Left cardiac atrium (tissue), 4 donors: ENCODE measurements at regions of chr4 and their contacts with region 1.

Region 1: GRCh38 chr4:3442959-3443749 is 1.4 kb downstream of the HGFAC start:
- DNase-seq: peak; percentile 56
- ATAC-seq: peak; percentile 61 to 64

Region 2: GRCh38 chr4:3047464-3048286 is 395.5 kb before region 1 on chr4:
- intact Hi-C with region 1: no loop called
- DNase-seq: peak; percentile 67
- ATAC-seq: peak; percentile 55 to 57

Region 3: DNA sequence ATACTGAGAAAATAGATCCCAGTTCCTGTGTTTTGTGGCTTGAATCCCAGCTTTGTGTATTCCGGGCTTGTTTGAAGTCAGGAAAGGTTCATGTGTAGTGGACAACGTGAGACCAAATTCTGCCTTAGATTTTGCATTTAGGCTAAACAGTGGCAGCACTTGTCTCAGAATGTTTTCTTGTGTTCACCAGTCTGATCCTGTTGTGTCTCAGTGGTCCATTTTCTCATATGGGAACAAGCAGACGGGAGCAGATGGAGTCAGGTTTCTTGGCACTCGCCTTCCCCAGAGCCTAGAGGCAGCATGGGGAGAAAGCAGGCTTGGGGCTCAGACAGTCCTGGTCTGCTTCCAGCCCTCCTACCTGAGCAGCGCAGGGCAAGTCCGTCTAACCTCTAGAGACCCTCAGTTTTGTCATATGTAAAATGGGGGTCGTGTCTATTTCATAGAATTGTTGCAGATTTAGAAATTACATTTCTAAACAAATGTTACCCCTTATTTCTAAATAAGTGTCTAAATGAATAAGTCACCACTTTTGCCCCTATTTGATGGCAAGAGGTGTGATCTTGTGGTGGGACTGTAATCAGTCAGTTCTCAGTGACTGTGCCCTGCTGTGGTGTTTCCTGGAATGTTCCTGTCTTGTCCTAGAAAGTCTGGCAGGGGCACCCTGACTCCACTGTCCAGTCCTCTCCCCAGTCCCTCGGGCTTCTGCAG is 222.5 kb before region 1 on chr4:
- intact Hi-C with region 1: no loop called
- DNase-seq: peak; percentile 9
- ATAC-seq: no peak

Region 4: DNA sequence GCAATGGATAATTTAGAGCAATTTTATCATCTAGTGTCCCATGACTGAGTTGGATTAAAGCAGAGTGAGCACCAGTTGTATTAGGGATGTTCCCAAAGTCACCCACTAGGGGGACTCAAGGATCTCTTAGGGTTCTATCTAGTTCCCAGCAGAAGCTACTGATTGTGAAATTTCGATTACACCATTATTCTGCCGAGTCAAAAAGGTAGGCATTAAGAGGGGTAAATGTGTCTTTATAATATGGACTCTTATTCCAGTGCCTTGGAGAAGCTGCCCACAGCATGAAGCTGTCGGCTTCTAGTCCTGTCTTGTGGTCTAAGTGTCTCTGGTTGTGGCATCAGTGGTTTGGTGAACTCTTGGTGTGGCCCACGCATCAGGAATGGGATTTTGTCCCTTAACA is 97.0 kb before region 1 on chr4:
- intact Hi-C with region 1: loop called (anchors 2 kb)
- DNase-seq: no peak
- ATAC-seq: peak; percentile 93 to 95

Region 5: DNA sequence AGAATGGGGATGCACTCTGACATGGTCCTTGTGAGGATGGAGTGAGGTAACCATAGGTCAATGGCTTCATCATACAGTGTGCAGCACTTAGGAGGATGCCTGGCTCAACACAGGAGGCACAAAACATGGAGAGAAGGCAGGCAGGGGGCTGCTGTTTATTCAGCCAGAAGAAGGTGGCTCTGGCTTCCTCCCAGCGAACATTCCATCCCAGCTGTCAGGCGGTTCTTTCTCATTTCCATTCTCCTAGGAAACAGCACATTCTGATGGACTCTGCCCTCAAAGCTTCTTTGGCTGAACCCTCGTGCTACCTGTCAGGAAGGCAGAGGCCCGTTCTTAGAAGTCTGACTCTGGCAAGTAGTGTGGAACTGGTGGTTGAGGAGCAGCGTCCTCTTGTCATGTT is 1626.7 kb after region 1 on chr4:
- intact Hi-C with region 1: no loop called
- DNase-seq: no peak
- ATAC-seq: no peak